Activated CD4-positive, alpha-beta memory T cell treated with anti-CD3 and anti-CD28 coated beads, Interleukin-2, amount 10 ng/mL, durations not matched to agents 7 days and 5 days (primary cell): ENCODE measurements at regions of chr7 and their contacts with region 1.

Region 1: DNA sequence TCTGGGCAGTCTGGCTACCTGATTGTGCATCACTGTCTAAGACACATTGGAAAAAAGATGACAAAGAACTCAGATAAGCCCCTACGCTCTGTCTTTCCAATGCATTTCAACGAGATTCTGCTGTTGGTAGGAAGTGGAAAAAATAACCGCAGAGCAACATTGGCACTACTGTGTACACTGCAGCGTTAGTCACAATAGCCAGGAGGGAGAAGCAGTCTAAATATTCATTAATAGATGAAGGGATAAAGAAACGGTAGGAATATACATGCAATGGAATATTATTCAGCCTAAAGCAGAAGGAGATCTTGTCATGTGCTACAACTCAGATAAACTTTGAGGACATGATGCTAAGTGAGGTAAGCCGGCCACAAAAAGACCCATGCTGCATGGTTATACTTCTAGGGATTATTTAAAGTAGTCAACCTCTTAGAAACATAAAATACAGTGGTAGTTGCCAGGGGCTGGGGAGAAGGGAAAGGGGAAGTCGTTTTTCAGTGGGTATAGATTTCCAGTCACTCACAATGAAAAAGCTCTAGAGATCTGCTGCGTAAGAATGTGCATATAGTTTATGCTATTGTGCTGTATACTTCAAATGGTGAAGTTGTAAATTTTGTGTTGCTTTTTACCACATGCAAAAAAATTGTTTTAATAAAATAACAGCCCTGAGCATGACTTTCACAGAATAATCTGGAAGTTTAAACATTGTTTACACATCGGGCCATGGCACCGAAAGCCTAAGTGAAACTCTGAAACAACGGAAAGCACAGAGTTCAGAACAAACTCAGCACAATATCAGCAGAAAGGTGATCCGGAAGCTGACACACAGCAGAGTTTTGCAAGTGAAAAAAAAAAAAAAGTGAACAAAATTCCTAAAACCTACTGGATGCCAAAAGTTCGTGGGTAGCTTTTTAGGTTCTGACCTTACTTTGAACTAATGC is 40.1 kb downstream of the ELMO1 start:
- DNase-seq: peak; percentile 30
- H3K4me3 Mint-ChIP-seq: peak overlapping the region; percentile 73
- H3K27ac Mint-ChIP-seq: peak overlapping the region; percentile 82
- H3K4me1 Mint-ChIP-seq: peaks cover 54% of the 10 kb centered on the region
- H3K27me3 Mint-ChIP-seq: no peaks in the 10 kb centered on the region

Region 2: DNA sequence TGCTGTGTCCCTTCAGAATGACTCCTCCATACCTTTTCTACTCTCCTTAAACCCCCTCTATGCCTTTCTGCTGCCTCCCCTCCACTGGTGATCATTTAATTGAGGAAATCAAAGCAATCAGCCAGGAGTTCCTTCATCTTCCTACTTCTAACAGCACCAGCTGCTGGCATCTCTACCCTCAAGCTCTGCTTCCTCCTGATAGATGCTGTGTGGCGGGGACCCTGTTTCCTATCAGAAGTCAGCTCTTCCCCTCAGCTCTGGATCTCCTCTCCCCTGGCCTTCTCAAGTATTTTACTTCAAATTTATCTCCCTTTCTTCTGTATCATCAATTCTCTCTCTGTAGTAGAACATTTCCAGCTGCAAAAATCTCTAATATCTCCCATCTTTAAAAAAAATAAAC is 143.6 kb before region 1 on chr7:
- CTCF ChIA-PET with region 1: no interaction called
- POLR2A ChIA-PET with region 1: no interaction called
- DNase-seq: no peak
- H3K4me3 Mint-ChIP-seq: no peak overlapping the region
- H3K27ac Mint-ChIP-seq: no peak overlapping the region
- H3K4me1 Mint-ChIP-seq: peaks cover 9% of the 10 kb centered on the region
- H3K27me3 Mint-ChIP-seq: no peaks in the 10 kb centered on the region

Region 3: DNA sequence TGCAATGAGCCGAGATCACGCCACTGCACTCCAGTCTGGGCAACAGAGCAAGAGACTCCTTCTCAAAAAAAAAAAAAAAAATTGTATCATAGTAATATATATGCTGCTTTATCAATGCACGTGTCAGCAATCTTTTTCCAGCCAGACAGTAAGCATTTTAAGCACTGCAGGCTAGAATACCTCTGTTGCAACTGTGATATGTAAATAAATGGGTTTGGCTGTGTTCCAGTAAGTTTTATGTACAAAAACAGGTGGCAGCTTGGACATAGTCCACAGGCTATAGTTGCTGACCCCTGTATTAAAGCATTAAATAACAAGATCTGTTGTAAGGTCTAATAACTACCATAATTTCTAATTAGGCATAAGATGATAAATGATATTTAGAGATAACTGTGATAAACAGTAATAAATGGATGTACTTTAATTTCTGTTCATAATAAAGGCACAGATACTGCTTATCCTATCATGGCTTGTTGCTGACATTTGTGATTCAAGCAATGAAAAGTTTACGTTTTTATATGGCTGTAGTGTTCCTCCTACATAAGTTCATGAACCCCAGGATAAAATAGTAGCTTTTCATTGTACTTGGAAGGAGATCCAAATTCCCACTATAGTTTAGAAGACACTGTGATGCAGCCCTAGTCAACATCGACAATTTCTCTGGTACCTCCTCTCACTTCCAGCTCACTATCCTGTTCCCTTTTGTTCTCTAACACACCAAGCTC is 121.3 kb before region 1 on chr7:
- CTCF ChIA-PET with region 1: no interaction called
- POLR2A ChIA-PET with region 1: no interaction called
- DNase-seq: no peak
- H3K4me3 Mint-ChIP-seq: no peak overlapping the region
- H3K27ac Mint-ChIP-seq: no peak overlapping the region
- H3K4me1 Mint-ChIP-seq: peaks cover 37% of the 10 kb centered on the region
- H3K27me3 Mint-ChIP-seq: no peaks in the 10 kb centered on the region

Region 4: GRCh38 chr7:37440738-37441385 is 32.3 kb after region 1 on chr7:
- CTCF ChIA-PET with region 1: interaction called, 5 read pairs
- POLR2A ChIA-PET with region 1: interaction called, 10 read pairs
- DNase-seq: peak; percentile 49
- H3K4me3 Mint-ChIP-seq: peak overlapping the region; percentile 52
- H3K27ac Mint-ChIP-seq: peak overlapping the region; percentile 89
- H3K4me1 Mint-ChIP-seq: peaks cover 72% of the 10 kb centered on the region
- H3K27me3 Mint-ChIP-seq: no peaks in the 10 kb centered on the region

Region 5: DNA sequence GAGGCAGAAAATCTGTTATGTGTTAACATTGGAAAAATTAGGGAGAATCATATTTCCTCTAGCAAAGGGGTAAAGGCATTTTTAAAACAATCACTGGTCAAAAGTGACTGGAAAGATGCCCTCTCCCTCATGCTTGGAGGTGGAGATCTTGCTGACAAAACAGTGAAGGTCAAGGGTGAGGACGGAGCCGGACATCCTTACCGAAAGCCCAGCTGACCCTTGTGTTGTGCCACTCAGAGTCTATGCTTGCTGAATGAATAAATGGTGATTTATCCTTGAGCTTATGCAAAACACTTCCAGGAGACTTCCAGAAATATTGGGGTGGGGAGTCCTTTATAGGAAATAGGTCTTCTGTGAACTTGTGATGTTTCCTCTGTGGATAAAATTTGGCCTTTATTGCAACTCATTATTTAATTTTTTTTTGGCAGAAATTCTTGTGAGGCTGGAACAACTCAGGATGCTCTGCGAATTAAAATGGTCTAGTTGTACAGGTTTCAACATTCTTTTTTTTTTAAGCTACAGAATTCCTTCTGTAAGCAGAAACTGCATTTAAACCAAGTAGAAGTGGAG is 68.4 kb after region 1 on chr7:
- CTCF ChIA-PET with region 1: no interaction called
- POLR2A ChIA-PET with region 1: no interaction called
- DNase-seq: no peak
- H3K4me3 Mint-ChIP-seq: no peak overlapping the region
- H3K27ac Mint-ChIP-seq: no peak overlapping the region
- H3K4me1 Mint-ChIP-seq: no peaks in the 10 kb centered on the region
- H3K27me3 Mint-ChIP-seq: peaks cover 53% of the 10 kb centered on the region